ENCODE measurements at regions of chr20 and their contacts with region 1.

Region 1: GRCh38 chr20:57622579-57623377 is 2.6 kb upstream of the ZBP1 start:
- DNase-seq: peak; percentile 81 to 87
- H3K4me3 ChIP-seq: no peak overlapping the region
- H3K4me3 Mint-ChIP-seq: no peak overlapping the region
- H3K27ac Mint-ChIP-seq: no peak overlapping the region
- H3K4me1 ChIP-seq: no peaks in the 10 kb centered on the region
- H3K4me1 Mint-ChIP-seq: no peaks in the 10 kb centered on the region
- H3K27me3 ChIP-seq: no peaks in the 10 kb centered on the region; the same call in 1 of the 2 replicates
- H3K27me3 Mint-ChIP-seq: peaks cover 15% of the 10 kb centered on the region
- CTCF ChIP-seq: peak; percentile 99

Region 2: GRCh38 chr20:57391074-57391554 is 231.7 kb before region 1 on chr20 and contains the start of gene RBM38:
- CTCF ChIA-PET with region 1: no interaction called
- POLR2A ChIA-PET with region 1: no interaction called
- intact Hi-C with region 1: no loop called
- DNase-seq: peak; percentile 86 to 93
- H3K4me3 ChIP-seq: peak within 1 kb of the TSS; percentile 96
- H3K4me3 Mint-ChIP-seq: peak within 1 kb of the TSS; percentile 80
- H3K27ac Mint-ChIP-seq: peak within 1 kb of the TSS; percentile 88
- H3K4me1 ChIP-seq: peaks cover 23% of the 10 kb centered on the region
- H3K4me1 Mint-ChIP-seq: peaks cover 20% of the 10 kb centered on the region
- H3K27me3 ChIP-seq: no peaks in the 10 kb centered on the region
- H3K27me3 Mint-ChIP-seq: no peaks in the 10 kb centered on the region
- CTCF ChIP-seq: no peak
- total RNA-seq, gene RBM38: 34.4 and 39.2 TPM in 2 replicates

Region 3: GRCh38 chr20:58087193-58087858 is 464.5 kb after region 1 on chr20:
- CTCF ChIA-PET with region 1: interaction called, 33 read pairs
- POLR2A ChIA-PET with region 1: no interaction called
- intact Hi-C with region 1: no loop called
- DNase-seq: peak; percentile 47 to 64
- H3K4me3 ChIP-seq: no peak overlapping the region
- H3K4me3 Mint-ChIP-seq: no peak overlapping the region
- H3K27ac Mint-ChIP-seq: no peak overlapping the region
- H3K4me1 ChIP-seq: no peaks in the 10 kb centered on the region
- H3K4me1 Mint-ChIP-seq: no peaks in the 10 kb centered on the region
- H3K27me3 ChIP-seq: 0 out of 2 replicates have a peak, but pooled peaks cover 1% of the 10 kb centered on the region
- H3K27me3 Mint-ChIP-seq: peaks cover 25% of the 10 kb centered on the region
- CTCF ChIP-seq: peak; percentile 94 to 97

Region 4: GRCh38 chr20:58209652-58210397 is 587.0 kb after region 1 on chr20:
- CTCF ChIA-PET with region 1: interaction called, 6 read pairs
- POLR2A ChIA-PET with region 1: interaction called, 4 read pairs
- intact Hi-C with region 1: loop called (anchors 1 kb)
- DNase-seq: peak; percentile 86 to 95
- H3K4me3 ChIP-seq: no peak overlapping the region
- H3K4me3 Mint-ChIP-seq: no peak overlapping the region
- H3K27ac Mint-ChIP-seq: no peak overlapping the region
- H3K4me1 ChIP-seq: no peaks in the 10 kb centered on the region
- H3K4me1 Mint-ChIP-seq: no peaks in the 10 kb centered on the region
- H3K27me3 ChIP-seq: peaks cover 2% of the 10 kb centered on the region
- H3K27me3 Mint-ChIP-seq: peaks cover 38% of the 10 kb centered on the region
- CTCF ChIP-seq: peak; percentile 100

Measured in Caco-2 (cell line).